ENCODE measurements at regions of chr20 and their contacts with region 1.

Region 1: DNA sequence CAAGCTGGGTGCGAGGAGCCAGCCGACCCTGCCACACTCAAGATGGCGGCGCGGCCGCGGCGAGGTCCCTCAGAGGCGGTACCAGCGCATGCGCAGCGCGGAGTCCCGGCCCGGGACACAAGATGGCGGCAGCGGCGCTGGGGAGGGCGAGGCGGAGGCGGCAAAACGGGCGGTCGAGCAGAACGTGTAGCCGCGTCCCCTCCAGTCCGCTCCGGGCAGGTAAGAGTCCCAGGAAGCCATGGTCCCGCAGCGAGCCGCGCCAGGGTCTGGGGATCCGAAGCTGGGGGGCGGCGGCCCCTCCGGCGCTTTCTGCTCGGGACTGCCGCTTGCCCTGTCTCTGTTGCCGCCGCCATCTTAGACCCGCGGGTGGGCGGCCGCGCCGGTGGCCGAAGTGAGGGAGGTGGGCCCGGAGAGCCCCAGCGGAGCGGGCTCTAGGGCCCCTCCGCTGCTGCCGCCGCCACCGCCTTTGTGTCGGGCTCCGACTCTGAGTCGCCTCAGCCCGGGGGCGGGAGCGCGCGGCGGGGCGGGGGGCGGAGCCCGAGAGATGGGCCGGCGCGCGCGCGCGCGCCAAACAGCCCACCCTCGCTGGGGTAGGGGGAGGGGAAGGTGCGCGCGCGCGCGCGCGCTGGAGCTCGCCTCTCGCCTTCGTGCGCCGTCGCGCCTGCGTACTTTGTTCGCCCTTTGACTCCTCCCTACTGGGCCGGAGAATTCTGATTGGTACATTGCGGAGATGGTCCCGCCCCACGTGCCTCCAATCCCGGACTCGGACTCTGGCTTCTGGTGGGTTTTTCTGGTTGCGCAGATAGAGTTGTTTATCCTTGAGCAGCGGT is at the start of gene PCIF1:
- DNase-seq: peak; percentile 98
- H3K4me3 ChIP-seq: peak within 1 kb of the TSS; percentile 97
- H3K27ac ChIP-seq: peak within 1 kb of the TSS; percentile 100
- H3K4me1 ChIP-seq: peaks cover 36% of the 10 kb centered on the region
- H3K27me3 ChIP-seq: no peaks in the 10 kb centered on the region
- CTCF ChIP-seq: no peak
- total RNA-seq, gene PCIF1: 47.5 and 55.8 TPM in 2 replicates

Region 2: DNA sequence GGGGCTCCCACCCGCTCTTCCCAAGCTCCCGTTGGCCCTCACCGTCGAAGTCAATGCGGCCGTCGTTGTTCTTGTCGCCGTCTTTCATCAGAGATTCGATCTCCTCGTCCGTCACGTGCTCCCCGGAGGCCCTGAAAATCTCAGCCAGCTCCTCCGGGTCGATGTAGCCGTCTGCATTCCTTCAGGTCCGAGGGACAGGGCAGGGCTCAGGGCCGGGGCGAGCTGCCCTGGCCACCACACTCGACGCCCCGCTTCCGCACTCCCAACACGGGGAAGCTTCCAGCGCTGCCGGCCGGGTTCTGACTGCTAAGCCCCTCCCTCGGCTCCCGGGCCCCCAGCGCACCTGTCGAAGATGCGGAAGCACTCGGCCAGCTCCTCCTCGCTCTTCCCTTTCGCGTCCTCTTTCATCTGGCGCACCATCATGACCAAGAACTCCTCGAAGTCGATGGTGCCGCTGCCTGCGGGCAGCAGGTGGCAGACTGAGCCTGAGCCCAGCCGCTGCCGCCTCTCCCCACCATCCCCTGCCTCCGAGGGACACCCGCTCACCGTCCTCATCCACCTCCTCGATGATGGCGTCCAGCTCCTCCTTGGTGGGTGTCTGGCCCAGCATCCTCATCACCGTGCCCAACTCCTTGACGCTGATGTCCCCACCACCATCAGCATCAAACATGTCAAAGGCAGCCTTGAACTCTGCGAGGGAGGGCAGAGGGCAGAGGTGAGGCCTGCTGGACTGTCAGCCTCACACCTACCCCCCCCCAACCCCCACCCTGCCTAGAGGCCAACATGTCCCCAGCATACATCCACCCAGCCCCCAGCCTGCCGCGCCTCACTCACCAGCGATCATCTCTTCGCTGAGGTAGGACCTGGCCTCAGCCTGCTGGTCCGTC is 110.6 kb before region 1 on chr20:
- CTCF ChIA-PET with region 1: no interaction called
- POLR2A ChIA-PET with region 1: interaction called, 10 read pairs
- intact Hi-C with region 1: no loop called
- DNase-seq: peak; percentile 60
- H3K4me3 ChIP-seq: no peak overlapping the region
- H3K27ac ChIP-seq: no peak overlapping the region
- H3K4me1 ChIP-seq: no peaks in the 10 kb centered on the region
- H3K27me3 ChIP-seq: no peaks in the 10 kb centered on the region
- CTCF ChIP-seq: peak; percentile 67

Region 3: GRCh38 chr20:45910670-45911485 is 23.9 kb before region 1 on chr20:
- CTCF ChIA-PET with region 1: no interaction called
- POLR2A ChIA-PET with region 1: interaction called, 11 read pairs
- intact Hi-C with region 1: loop called (anchors 1 kb)
- DNase-seq: peak; percentile 100
- H3K4me3 ChIP-seq: peak overlapping the region; percentile 63
- H3K27ac ChIP-seq: peak overlapping the region; percentile 81
- H3K4me1 ChIP-seq: peaks cover 17% of the 10 kb centered on the region
- H3K27me3 ChIP-seq: no peaks in the 10 kb centered on the region
- CTCF ChIP-seq: no peak

Region 4: GRCh38 chr20:46031701-46032254 is 97.0 kb after region 1 on chr20:
- CTCF ChIA-PET with region 1: no interaction called
- POLR2A ChIA-PET with region 1: interaction called, 11 read pairs
- intact Hi-C with region 1: no loop called
- DNase-seq: peak; percentile 47
- H3K4me3 ChIP-seq: peak overlapping the region; percentile 21
- H3K27ac ChIP-seq: no peak overlapping the region
- H3K4me1 ChIP-seq: no peaks in the 10 kb centered on the region
- H3K27me3 ChIP-seq: peaks cover 61% of the 10 kb centered on the region
- CTCF ChIP-seq: no peak

Region 5: GRCh38 chr20:47156301-47157148 is 1221.7 kb after region 1 on chr20:
- CTCF ChIA-PET with region 1: no interaction called
- POLR2A ChIA-PET with region 1: no interaction called
- intact Hi-C with region 1: no loop called
- DNase-seq: no peak
- H3K4me3 ChIP-seq: no peak overlapping the region
- H3K27ac ChIP-seq: no peak overlapping the region
- H3K4me1 ChIP-seq: no peaks in the 10 kb centered on the region
- H3K27me3 ChIP-seq: no peaks in the 10 kb centered on the region
- CTCF ChIP-seq: no peak